Activated CD4-positive, alpha-beta T cell treated with anti-CD3 and anti-CD28 coated beads, Interleukin-2, amount 10 ng/mL, durations not matched to agents 7 days and 5 days (primary cell): ENCODE measurements at regions of chr10 and their contacts with region 1.

Region 1: DNA sequence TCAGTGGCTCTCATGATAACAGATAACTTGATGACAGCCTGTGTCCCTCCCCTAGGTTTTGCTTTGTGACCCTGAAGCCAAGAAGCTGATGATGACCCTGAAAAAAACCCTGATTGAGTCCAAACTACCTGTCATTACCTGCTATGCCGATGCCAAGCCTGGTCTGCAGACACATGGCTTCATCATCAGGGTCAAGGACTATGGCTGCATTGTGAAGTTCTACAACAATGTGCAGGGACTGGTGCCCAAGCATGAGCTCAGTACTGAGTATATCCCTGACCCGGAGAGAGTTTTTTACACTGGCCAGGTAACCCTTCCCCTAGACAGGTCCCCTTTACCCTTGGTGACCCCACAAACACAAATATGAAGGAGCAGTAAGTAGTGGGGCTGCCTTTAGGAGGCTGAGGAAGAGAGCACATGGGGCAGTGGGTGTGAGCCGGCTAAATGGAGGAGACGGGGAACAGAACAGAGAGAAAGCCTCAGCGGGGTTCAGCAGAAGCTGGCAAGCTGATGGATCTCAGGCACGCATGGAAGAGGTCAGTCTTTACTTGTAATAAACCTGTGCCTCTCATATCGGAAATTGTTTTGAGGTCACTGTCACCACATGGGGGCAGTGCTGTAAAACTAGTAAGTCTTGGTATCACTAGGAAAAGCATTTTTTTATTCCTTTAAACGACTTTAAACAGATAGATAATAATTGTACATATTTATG is 20.2 kb downstream of the PDCD11 start:
- DNase-seq: peak; percentile 83
- H3K4me3 Mint-ChIP-seq: no peak overlapping the region
- H3K27ac Mint-ChIP-seq: no peak overlapping the region
- H3K4me1 Mint-ChIP-seq: peaks cover 5% of the 10 kb centered on the region
- H3K27me3 Mint-ChIP-seq: no peaks in the 10 kb centered on the region

Region 2: DNA sequence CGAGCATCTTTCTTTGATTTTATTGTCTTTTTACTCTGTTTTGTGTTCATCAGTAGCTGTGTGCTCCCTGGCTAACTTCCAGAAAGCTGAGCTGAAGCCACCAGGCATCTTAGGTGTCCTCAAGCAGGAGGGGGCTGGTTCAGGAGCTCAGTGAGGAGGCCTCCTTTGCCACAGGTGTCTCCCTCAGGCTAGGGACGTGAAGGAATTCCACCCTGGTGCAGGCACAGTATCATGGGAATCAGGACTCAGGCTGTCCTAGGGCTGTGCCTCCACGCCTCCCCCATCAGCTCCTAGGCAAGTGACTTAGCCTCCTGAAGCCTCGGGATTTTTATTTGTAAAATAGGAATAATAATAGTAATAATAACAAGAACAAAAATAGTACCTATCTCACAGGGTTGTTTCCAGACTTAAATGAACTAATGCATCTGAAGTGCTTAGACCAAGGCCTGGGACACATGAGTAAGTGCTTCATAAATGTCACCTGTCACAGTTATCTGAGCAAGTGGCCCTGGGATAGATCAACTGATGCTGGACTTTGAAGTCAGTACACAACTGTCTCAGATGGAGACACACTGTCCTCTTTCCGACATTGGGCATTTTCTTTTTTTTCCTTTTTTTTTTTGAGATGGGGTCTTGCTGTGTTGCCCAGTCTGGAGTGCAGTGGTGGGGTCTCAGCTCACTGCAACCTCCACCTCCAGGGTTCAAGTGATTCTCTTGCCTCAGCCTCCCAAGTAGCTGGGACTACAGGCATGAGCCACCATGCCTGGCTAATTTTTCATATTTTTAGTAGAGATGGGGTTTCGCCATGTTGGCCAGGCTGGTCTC is 70.0 kb after region 1 on chr10:
- CTCF ChIA-PET with region 1: interaction called, 40 read pairs
- POLR2A ChIA-PET with region 1: no interaction called
- DNase-seq: no peak
- H3K4me3 Mint-ChIP-seq: no peak overlapping the region
- H3K27ac Mint-ChIP-seq: no peak overlapping the region
- H3K4me1 Mint-ChIP-seq: peaks cover 24% of the 10 kb centered on the region
- H3K27me3 Mint-ChIP-seq: peaks cover 11% of the 10 kb centered on the region